Dendritic cell treated with granulocyte-macrophage colony-stimulating factor and Interleukin-4, amounts not matched to agents 40 ng/mL and 50 ng/mL, for 4 days (primary cell): ENCODE measurements at regions of chr1 and their contacts with region 1.

Region 1: DNA sequence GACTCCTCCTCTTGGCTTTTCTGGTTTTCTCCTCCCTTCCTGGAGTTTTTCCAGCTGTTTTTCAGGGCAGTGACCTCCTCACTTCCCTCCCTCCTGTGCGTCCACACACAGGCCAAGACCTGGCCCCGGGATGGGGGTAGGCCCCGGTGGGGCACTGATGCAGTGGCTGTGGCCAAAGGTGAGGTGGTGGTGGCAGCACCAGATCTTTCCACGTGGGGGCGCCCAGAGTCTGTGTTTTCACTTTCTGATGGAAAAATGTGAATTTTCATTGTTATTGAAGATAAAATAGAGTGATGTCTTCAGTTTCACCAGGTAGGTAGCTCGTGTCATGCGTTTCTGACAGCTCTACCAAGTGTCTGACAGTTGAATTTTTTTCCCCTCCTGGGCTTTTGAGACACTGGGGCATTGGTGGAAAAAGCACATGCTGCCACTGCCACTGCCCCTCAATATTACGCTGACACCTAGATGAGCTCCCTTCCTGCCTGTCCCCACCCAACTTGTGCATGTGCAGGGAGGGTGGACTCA is 39.9 kb upstream of the MAGOH start:
- H3K4me3 Mint-ChIP-seq: no peak overlapping the region
- H3K27ac Mint-ChIP-seq: no peak overlapping the region
- H3K4me1 Mint-ChIP-seq: peaks cover 8% of the 10 kb centered on the region
- H3K27me3 Mint-ChIP-seq: no peaks in the 10 kb centered on the region

Region 2: DNA sequence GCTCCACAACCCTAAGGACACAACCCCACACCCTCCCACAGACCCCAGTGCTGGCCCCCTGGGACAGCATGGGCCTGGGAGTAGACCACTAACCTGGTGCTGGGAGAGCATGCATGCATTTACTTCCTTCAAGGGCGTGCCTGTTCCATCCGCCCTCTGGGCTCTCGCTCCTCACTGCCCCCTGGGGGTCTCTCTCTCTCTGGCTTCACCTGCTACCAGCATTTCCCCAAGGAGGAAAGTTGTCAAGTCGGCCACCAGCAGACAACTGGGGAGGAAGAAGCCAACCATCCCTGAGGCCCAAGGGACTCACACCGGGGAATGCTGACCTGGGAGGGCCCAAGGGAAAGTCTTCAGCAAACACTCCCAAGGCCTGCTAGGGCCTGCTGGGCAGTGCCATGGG is 43.1 kb after region 1 on chr1:
- intact Hi-C with region 1: no loop called
- H3K4me3 Mint-ChIP-seq: no peak overlapping the region
- H3K27ac Mint-ChIP-seq: no peak overlapping the region
- H3K4me1 Mint-ChIP-seq: peaks cover 34% of the 10 kb centered on the region
- H3K27me3 Mint-ChIP-seq: no peaks in the 10 kb centered on the region

Region 3: GRCh38 chr1:53344891-53345838 is 66.9 kb after region 1 on chr1:
- intact Hi-C with region 1: no loop called
- H3K4me3 Mint-ChIP-seq: no peak overlapping the region
- H3K27ac Mint-ChIP-seq: no peak overlapping the region
- H3K4me1 Mint-ChIP-seq: peaks cover 7% of the 10 kb centered on the region
- H3K27me3 Mint-ChIP-seq: peaks cover 4% of the 10 kb centered on the region

Region 4: DNA sequence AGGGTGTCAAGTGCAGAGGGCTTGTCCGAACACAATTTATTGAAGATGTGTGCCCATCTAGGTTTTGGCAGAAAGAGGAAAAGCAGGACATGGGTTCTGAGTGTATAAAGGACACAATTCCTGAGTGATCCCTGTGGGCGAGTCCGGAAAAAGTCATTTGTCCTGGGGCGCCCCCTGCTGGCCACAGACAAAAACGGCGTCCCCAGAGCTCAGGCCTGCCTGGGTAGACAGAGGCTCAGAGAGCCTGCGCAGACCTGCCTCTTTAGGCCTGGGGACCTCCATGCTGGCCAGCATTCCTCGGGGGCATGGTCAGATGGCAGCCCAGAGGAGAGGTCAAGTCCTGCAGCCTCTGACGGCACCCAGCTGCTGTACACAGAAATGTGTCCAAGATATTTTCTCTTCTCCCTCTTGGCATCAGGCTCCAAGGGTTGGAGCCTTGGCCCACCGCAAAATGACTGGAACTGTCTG is 115.1 kb after region 1 on chr1:
- intact Hi-C with region 1: loop called (anchors 1 kb)
- H3K4me3 Mint-ChIP-seq: no peak overlapping the region
- H3K27ac Mint-ChIP-seq: no peak overlapping the region
- H3K4me1 Mint-ChIP-seq: peaks cover 23% of the 10 kb centered on the region
- H3K27me3 Mint-ChIP-seq: peaks cover 6% of the 10 kb centered on the region